ENCODE measurements at regions of chr10 and their contacts with region 1.

Region 1: GRCh38 chr10:118341791-118342637 is at the start of gene FAM204A:
- DNase-seq: peak; percentile 98
- ATAC-seq: peak; percentile 98
- H3K4me3 ChIP-seq: peak within 1 kb of the TSS; percentile 82 to 96 (median 94)
- H3K4me3 Mint-ChIP-seq: peak within 1 kb of the TSS; percentile 95
- H3K27ac ChIP-seq: peak within 1 kb of the TSS; percentile 31 to 90
- H3K27ac Mint-ChIP-seq: peak within 1 kb of the TSS; percentile 96
- H3K4me1 ChIP-seq: peaks cover 20 to 21% of the 10 kb centered on the region in 2 donors
- H3K4me1 Mint-ChIP-seq: peaks cover 51% of the 10 kb centered on the region
- H3K27me3 ChIP-seq: no peaks in the 10 kb centered on the region
- H3K27me3 Mint-ChIP-seq: peaks cover 4% of the 10 kb centered on the region
- CTCF ChIP-seq: no peak
- total RNA-seq, gene FAM204A: 77.8 and 79.8 TPM in 2 replicates

Region 2: DNA sequence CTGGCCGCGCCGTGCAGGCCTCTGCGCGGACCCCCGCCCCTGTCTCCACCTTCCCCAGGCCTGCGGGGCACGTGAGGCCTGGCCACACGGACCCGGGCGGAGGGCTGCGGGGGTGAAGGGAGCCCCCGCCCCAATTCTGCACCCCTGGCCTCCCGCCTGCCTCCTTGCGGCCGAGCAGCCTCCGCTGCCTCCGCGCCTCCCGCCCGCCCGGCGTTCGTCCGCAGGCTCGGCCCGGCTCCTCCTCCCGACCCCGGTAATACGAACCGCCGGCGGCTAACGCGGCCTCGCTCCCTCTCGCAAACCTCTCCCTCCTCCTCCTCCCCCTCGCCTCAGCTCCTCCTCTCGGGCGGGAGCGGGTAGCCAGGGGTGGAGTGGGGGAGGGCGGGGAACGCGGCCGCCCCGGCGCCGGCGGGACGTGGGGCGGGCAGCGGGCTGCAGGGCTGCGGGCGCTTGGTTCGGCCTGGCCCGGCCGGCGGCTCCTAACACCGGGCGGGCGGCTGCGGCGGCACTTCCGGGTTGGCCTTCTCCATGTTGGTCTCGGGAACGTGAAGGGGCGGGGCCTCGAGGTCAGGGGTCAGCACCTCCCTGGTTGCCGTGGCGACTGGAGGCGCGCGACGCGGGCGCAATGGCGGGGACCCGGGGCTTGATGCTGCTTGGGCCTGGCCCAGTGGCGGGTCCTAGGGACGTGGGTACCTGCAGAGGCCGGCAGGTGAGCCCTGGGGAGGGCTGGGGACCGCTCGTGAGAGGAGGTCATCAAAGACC is 295.4 kb before region 1 on chr10 and contains the start of gene RAB11FIP2:
- CTCF ChIA-PET with region 1: no interaction called
- POLR2A ChIA-PET with region 1: no interaction called
- intact Hi-C with region 1: loop called (anchors 1 kb)
- DNase-seq: peak; percentile 96
- ATAC-seq: peak; percentile 92
- H3K4me3 ChIP-seq: peak within 1 kb of the TSS; percentile 64 to 92 (median 80)
- H3K4me3 Mint-ChIP-seq: peak within 1 kb of the TSS; percentile 94
- H3K27ac ChIP-seq: peak within 1 kb of the TSS in 1 of 2 donors; percentile 88
- H3K27ac Mint-ChIP-seq: peak within 1 kb of the TSS; percentile 91
- H3K4me1 ChIP-seq: peaks cover 15 to 17% of the 10 kb centered on the region in 2 donors
- H3K4me1 Mint-ChIP-seq: peaks cover 33% of the 10 kb centered on the region
- H3K27me3 ChIP-seq: no peaks in the 10 kb centered on the region
- H3K27me3 Mint-ChIP-seq: no peaks in the 10 kb centered on the region
- CTCF ChIP-seq: no peak
- total RNA-seq, gene RAB11FIP2: 30.6 and 33.6 TPM in 2 replicates

Region 3: DNA sequence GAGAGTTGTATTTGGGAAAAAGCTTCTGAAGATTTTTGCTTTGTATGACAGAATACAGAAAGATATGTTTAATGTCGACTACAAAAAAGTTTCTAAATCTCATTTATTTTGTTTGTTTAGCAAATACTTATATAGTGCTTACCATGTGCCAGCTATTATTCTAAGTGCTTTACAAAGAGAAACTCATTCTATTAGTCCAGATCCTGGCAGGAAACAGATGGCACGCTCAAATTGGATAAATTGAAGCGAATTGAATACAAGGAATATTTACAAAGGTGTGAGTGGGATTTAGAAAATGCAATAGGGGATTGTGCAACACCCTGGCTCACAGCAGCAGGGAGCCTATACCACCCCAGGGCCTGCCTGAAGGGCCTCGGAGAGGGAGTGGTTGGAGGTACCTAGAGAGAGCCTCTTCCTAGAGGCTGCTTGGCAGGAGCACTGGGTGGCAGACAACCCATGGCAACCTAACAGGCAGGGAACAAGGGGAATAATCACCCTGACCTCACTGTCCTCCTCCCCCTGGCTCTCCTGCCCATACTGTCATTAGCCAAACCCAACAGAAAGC is 27.7 kb after region 1 on chr10:
- CTCF ChIA-PET with region 1: no interaction called
- POLR2A ChIA-PET with region 1: no interaction called
- intact Hi-C with region 1: no loop called
- DNase-seq: no peak
- ATAC-seq: no peak
- H3K4me3 ChIP-seq: no peak overlapping the region
- H3K4me3 Mint-ChIP-seq: no peak overlapping the region
- H3K27ac ChIP-seq: no peak overlapping the region
- H3K27ac Mint-ChIP-seq: no peak overlapping the region
- H3K4me1 ChIP-seq: no peaks in the 10 kb centered on the region
- H3K4me1 Mint-ChIP-seq: no peaks in the 10 kb centered on the region
- H3K27me3 ChIP-seq: peaks cover 0 to 10% (median 5%) of the 10 kb centered on the region in 4 experiments
- H3K27me3 Mint-ChIP-seq: peaks cover 12% of the 10 kb centered on the region
- CTCF ChIP-seq: no peak